Activated naive CD4-positive, alpha-beta T cell treated with anti-CD3 and anti-CD28 coated beads for 36 hours (primary cell): ENCODE measurements at regions of chr13 and their contacts with region 1.

Region 1: GRCh38 chr13:45851171-45851921 is at the start of gene SIAH3:
- DNase-seq: peak; percentile 47
- H3K4me3 Mint-ChIP-seq: peak within 1 kb of the TSS; percentile 85
- H3K27ac Mint-ChIP-seq: peak within 1 kb of the TSS; percentile 54
- H3K4me1 Mint-ChIP-seq: peaks cover 50% of the 10 kb centered on the region
- H3K27me3 Mint-ChIP-seq: no peaks in the 10 kb centered on the region
- total RNA-seq, gene SIAH3: 0.07 to 0.12 TPM

Region 2: DNA sequence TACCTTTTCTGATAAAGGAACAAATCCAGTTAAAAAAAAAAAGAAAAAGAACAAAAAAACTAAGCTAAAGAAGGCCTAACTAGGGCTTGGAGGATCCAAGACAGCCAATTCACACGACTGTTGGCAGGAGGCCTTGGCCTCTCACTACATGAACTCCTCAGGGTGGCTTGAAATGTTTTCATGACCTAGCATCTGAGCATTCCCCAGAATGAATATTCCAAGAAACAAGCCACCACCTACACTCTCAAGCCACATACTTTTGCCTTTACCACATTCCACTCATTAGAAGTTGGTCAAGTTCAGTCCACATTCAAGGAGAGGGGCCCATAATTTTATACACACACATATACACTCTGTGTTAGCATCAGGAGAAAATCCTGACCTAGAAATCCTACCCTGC is 97.8 kb after region 1 on chr13:
- CTCF ChIA-PET with region 1: no interaction called
- intact Hi-C with region 1: no loop called
- DNase-seq: no peak
- H3K4me3 Mint-ChIP-seq: no peak overlapping the region
- H3K27ac Mint-ChIP-seq: no peak overlapping the region
- H3K4me1 Mint-ChIP-seq: no peaks in the 10 kb centered on the region
- H3K27me3 Mint-ChIP-seq: no peaks in the 10 kb centered on the region

Region 3: GRCh38 chr13:45966715-45967114 is 115.4 kb after region 1 on chr13:
- CTCF ChIA-PET with region 1: no interaction called
- intact Hi-C with region 1: loop called (anchors 5 kb)
- DNase-seq: peak; percentile 12
- H3K4me3 Mint-ChIP-seq: no peak overlapping the region
- H3K27ac Mint-ChIP-seq: peak overlapping the region; percentile 50
- H3K4me1 Mint-ChIP-seq: peaks cover 14% of the 10 kb centered on the region
- H3K27me3 Mint-ChIP-seq: no peaks in the 10 kb centered on the region

Region 4: GRCh38 chr13:46052319-46053161 is 201.2 kb after region 1 on chr13 and contains the start of gene ZC3H13:
- CTCF ChIA-PET with region 1: no interaction called
- intact Hi-C with region 1: loop called (anchors 5 kb)
- DNase-seq: peak; percentile 97
- H3K4me3 Mint-ChIP-seq: peak within 1 kb of the TSS; percentile 81
- H3K27ac Mint-ChIP-seq: peak within 1 kb of the TSS; percentile 94
- H3K4me1 Mint-ChIP-seq: peaks cover 29% of the 10 kb centered on the region
- H3K27me3 Mint-ChIP-seq: peaks cover 4% of the 10 kb centered on the region
- total RNA-seq, gene ZC3H13: 38.2 to 42.2 TPM